Heart right ventricle (tissue), 16 donors: ENCODE measurements at regions of chr3 and their contacts with region 1.

Region 1: DNA sequence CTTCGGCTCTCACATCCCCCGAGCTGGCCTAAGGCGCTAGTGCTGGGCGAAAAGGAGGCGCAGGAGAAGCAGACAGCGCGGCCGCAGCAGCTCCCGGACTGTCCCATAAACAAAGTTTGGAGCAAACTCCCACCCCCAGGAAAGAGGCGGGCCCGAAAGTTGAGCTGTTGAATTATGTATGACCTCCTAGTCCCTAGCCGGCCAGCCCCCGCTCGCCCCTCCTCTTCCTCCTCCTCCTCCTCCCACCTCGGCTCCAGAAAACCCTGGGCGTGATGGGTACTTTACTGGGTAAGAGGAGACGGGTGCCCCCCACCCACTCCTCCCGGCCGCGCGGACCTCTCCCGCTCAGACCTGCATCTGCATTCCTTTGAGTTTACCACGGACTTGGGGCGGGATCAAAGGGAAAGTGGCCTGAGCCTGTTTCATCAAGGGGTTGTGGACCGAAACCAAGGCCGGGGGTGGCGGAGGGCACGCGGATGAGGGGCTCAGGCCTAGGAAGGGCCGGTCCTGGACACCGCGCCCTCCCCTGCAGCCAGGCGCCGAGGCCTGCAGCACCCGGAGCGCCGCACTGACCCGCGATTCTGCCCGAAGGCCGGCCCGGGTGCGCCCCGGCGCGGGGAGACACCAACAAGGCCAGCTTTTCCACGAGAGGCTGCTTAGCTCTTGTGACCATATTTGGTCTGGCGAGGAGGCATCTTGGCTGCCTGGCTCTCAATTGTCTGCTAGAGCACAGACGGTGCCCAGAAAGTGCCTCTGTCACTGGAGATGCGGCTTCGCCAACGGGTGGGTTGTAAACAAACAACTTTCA is at the start of gene WWTR1:
- DNase-seq: peak; percentile 91 to 97
- ATAC-seq: peak; percentile 88 to 95 (median 92)
- H3K4me3 ChIP-seq: peak within 1 kb of the TSS; percentile 45 to 96 (median 87)
- H3K27ac ChIP-seq: peak within 1 kb of the TSS; percentile 95 to 99 (median 98)
- H3K4me1 ChIP-seq: peaks cover 2 to 53% (median 44%) of the 10 kb centered on the region in 9 donors
- H3K27me3 ChIP-seq: peaks cover 0 to 58% (median 0%) of the 10 kb centered on the region in 7 donors
- CTCF ChIP-seq: peak in 6 of 9 donors; percentile 12 to 62 (median 44)
- total RNA-seq, gene WWTR1: 30.3 to 78.6 (median 43.7) TPM

Region 2: GRCh38 chr3:149460117-149460516 is 198.0 kb before region 1 on chr3:
- intact Hi-C with region 1: no loop called
- DNase-seq: peak in 1 of 2 donors; percentile 29
- ATAC-seq: peak in 7 of 8 donors; percentile 69 to 84 (median 76)
- H3K4me3 ChIP-seq: no peak overlapping the region
- H3K27ac ChIP-seq: peak overlapping the region in 5 of 10 donors; percentile 8 to 59 (median 37)
- H3K4me1 ChIP-seq: peaks cover 0 to 7% (median 0%) of the 10 kb centered on the region in 9 donors
- H3K27me3 ChIP-seq: no peaks in the 10 kb centered on the region
- CTCF ChIP-seq: no peak

Region 3: DNA sequence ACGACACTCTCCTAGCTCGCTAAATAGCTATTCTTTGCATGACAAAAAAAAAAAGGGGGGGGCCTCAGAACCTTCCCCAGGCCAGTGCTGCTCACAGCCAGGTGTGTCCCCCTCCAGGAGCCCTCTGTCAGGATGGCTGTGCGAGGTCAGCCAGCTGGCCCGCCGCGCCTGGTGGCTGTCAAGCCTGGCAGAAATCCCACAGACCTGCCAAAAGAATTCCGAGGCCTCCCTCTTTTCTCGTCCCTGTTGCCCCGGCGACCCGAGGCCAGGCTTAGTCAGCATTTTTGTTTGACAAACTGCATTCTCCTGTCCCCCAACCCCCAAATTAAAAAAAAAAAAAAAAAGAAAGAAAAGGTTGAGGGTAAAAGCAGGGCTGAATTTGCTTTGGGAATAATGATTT is 121.7 kb before region 1 on chr3:
- intact Hi-C with region 1: loop called in 6 of 10 experiments (anchors 2 to 10 kb)
- DNase-seq: peak; percentile 76 to 78
- ATAC-seq: peak; percentile 77 to 91 (median 86)
- H3K4me3 ChIP-seq: peak overlapping the region in 4 of 10 donors; percentile 8 to 13 (median 11)
- H3K27ac ChIP-seq: peak overlapping the region in 5 of 10 donors; percentile 5 to 53 (median 23)
- H3K4me1 ChIP-seq: peaks cover 8 to 75% (median 52%) of the 10 kb centered on the region in 9 donors
- H3K27me3 ChIP-seq: no peaks in the 10 kb centered on the region
- CTCF ChIP-seq: no peak

Region 4: GRCh38 chr3:149575961-149576564 is 82.1 kb before region 1 on chr3:
- intact Hi-C with region 1: loop called in 9 of 10 experiments (anchors 5 to 10 kb)
- DNase-seq: peak in 1 of 2 donors; percentile 68
- ATAC-seq: peak; percentile 71 to 89 (median 80)
- H3K4me3 ChIP-seq: peak overlapping the region in 6 of 10 donors; percentile 2 to 22 (median 8)
- H3K27ac ChIP-seq: peak overlapping the region; percentile 68 to 93 (median 82)
- H3K4me1 ChIP-seq: peaks cover 6 to 100% (median 92%) of the 10 kb centered on the region in 9 donors
- H3K27me3 ChIP-seq: peaks cover 0 to 3% (median 0%) of the 10 kb centered on the region in 7 donors
- CTCF ChIP-seq: peak in 1 of 9 donors; percentile 11

Region 5: DNA sequence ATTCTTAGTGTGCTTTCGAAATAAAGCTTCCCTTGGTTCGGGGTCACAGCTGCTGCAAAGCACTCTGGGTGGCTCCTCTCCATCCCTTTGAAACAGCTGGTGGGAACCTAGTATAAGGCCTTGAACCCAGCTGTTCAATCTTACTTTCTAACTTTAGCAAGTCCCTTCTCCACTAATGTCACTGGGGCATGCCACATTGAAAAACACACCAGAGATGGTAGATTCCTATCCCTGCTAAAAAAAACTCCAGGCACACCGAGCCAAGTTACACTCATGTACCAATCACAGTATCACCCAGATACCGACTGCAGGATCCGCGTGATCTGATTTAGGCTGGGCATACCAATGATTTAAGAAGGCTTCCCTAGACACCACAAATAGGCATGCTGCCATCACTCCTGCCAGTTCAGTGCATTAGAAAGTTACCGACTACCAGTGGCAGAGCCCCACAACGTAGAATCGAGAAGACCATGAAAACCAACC is 65.3 kb before region 1 on chr3:
- intact Hi-C with region 1: loop called in 4 of 10 experiments (anchors 5 to 10 kb)
- DNase-seq: peak in 1 of 2 donors; percentile 73
- ATAC-seq: peak; percentile 57 to 97 (median 78)
- H3K4me3 ChIP-seq: peak overlapping the region in 4 of 10 donors; percentile 1 to 10 (median 6)
- H3K27ac ChIP-seq: peak overlapping the region in 7 of 10 donors; percentile 12 to 76 (median 71)
- H3K4me1 ChIP-seq: peaks cover 13 to 84% (median 72%) of the 10 kb centered on the region in 9 donors
- H3K27me3 ChIP-seq: peaks cover 0 to 5% (median 0%) of the 10 kb centered on the region in 7 donors
- CTCF ChIP-seq: no peak

Region 6: GRCh38 chr3:149717391-149718056 is 59.4 kb after region 1 on chr3:
- intact Hi-C with region 1: loop called in 8 of 10 experiments (anchors 5 to 10 kb)
- DNase-seq: peak in 1 of 2 donors; percentile 66
- ATAC-seq: peak in 7 of 8 donors; percentile 51 to 79 (median 72)
- H3K4me3 ChIP-seq: peak overlapping the region in 3 of 10 donors; percentile 15 to 31 (median 25)
- H3K27ac ChIP-seq: peak overlapping the region in 3 of 10 donors; percentile 3 to 35 (median 29)
- H3K4me1 ChIP-seq: peaks cover 0 to 10% (median 3%) of the 10 kb centered on the region in 9 donors
- H3K27me3 ChIP-seq: no peaks in the 10 kb centered on the region
- CTCF ChIP-seq: peak; percentile 54 to 87 (median 77)

Region 7: GRCh38 chr3:149969940-149970715 is 312.0 kb after region 1 on chr3:
- intact Hi-C with region 1: no loop called
- DNase-seq: peak; percentile 81 to 83
- ATAC-seq: peak; percentile 65 to 81 (median 78)
- H3K4me3 ChIP-seq: peak overlapping the region; percentile 77 to 98 (median 84)
- H3K27ac ChIP-seq: peak overlapping the region; percentile 64 to 96 (median 92)
- H3K4me1 ChIP-seq: peaks cover 0 to 45% (median 39%) of the 10 kb centered on the region in 9 donors
- H3K27me3 ChIP-seq: peaks cover 0 to 55% (median 0%) of the 10 kb centered on the region in 7 donors
- CTCF ChIP-seq: no peak